ENCODE measurements at regions of chr12 and their contacts with region 1.

Region 1: DNA sequence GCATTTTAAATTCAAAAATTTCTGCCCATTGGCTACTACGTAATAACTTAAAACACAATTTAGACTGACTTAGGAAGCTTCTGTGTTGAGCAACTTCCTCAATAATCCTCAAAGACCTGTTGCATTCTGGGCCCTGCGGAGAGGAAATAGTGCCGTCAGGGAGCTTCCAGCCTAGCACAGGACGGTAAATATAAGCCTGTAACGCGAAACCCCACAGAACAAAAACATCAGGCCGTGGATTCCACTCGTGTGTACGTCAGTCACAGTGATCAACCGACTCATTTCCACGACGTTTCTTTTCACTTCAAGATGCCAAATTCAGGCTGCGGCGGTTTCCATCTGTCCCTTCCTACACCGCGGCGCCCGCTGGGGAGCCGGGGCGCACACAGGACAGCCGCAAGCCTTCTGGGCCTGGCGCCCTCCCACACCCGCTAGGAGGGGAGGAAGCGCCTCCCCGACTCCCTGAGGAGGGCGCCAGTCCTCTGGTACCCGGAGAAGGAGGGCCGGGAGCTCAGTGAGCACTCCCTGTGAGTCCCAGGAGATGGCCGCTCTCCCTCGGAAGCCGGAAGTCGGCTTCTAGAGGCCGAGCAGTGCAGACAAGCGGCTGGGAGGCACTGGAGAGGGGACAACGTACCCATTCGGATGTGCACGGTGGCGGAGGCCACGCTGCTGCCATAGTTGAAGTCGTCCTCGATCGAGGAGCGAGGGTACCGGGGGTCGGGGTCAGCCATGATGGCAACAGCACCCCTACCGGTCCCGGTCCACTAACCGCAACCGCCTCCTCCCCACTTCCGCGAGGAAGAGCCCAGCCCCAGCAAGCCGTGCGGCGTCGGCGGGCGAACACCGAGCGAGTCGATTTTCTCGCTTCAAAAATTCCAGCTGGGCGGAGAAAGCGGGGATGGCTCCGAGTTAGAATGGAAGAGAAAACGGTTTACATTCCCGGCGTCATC is at the start of gene TMBIM4:
- DNase-seq: peak; percentile 80 to 84
- H3K4me3 ChIP-seq: peak within 1 kb of the TSS; percentile 74
- H3K27ac ChIP-seq: peak within 1 kb of the TSS; percentile 87
- H3K4me1 ChIP-seq: peaks cover 10% of the 10 kb centered on the region
- H3K27me3 ChIP-seq: no peaks in the 10 kb centered on the region
- CTCF ChIP-seq: peak; percentile 59; the same call in 1 of the 2 replicates
- total RNA-seq, gene TMBIM4: 48.2 and 49.8 TPM in 2 replicates

Region 2: GRCh38 chr12:65740873-65741600 is 428.5 kb before region 1 on chr12:
- CTCF ChIA-PET with region 1: no interaction called
- POLR2A ChIA-PET with region 1: interaction called, 19 read pairs
- intact Hi-C with region 1: no loop called
- DNase-seq: peak in 1 of 2 experiments; percentile 18
- H3K4me3 ChIP-seq: no peak overlapping the region
- H3K27ac ChIP-seq: no peak overlapping the region
- H3K4me1 ChIP-seq: no peaks in the 10 kb centered on the region
- H3K27me3 ChIP-seq: no peaks in the 10 kb centered on the region
- CTCF ChIP-seq: no peak

Region 3: DNA sequence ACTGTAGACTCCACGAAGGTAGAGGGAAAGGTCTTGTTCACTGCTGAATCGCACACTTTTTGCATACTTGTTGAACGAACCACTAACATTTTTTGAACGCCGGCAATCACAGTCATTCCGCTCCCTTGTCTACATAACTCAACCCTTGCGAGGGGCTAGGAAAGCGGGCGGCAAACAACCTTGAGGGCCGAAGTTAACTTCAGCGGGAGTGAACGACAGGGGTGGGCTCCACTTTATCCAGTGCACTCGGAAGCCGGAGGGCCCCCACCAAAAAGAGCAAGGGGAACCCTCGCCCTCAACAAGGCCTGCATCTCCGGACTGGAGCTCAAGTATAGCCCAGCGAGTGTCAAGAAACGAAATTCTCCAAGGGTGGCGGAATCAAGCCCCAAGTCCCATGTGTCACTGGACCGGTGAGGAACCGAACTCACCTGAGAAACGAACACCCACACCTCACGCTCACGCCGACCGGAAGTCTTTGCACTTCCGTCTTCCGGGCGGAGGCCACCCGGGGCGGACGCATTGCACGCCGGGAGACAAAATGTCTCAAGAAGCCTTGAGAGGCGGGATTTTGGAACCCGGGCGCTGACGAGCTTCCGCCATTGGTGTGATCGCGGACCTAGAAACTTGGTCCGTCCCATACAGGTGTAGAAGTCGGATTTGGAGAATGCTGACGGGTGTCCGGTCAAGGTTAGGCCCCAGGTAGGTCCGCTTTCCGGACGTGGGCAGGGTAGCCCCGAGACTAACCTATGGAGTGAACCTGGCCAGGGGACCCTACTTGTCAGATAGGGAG is 39.0 kb before region 1 on chr12 and contains the start of gene LLPH:
- CTCF ChIA-PET with region 1: interaction called, 3 read pairs
- POLR2A ChIA-PET with region 1: no interaction called
- intact Hi-C with region 1: loop called (anchors 2 kb)
- DNase-seq: peak; percentile 84 to 91
- H3K4me3 ChIP-seq: peak within 1 kb of the TSS; percentile 91
- H3K27ac ChIP-seq: peak within 1 kb of the TSS; percentile 63
- H3K4me1 ChIP-seq: peaks cover 16% of the 10 kb centered on the region
- H3K27me3 ChIP-seq: no peaks in the 10 kb centered on the region
- CTCF ChIP-seq: no peak
- total RNA-seq, gene LLPH: 20.4 and 25.0 TPM in 2 replicates

Region 4: DNA sequence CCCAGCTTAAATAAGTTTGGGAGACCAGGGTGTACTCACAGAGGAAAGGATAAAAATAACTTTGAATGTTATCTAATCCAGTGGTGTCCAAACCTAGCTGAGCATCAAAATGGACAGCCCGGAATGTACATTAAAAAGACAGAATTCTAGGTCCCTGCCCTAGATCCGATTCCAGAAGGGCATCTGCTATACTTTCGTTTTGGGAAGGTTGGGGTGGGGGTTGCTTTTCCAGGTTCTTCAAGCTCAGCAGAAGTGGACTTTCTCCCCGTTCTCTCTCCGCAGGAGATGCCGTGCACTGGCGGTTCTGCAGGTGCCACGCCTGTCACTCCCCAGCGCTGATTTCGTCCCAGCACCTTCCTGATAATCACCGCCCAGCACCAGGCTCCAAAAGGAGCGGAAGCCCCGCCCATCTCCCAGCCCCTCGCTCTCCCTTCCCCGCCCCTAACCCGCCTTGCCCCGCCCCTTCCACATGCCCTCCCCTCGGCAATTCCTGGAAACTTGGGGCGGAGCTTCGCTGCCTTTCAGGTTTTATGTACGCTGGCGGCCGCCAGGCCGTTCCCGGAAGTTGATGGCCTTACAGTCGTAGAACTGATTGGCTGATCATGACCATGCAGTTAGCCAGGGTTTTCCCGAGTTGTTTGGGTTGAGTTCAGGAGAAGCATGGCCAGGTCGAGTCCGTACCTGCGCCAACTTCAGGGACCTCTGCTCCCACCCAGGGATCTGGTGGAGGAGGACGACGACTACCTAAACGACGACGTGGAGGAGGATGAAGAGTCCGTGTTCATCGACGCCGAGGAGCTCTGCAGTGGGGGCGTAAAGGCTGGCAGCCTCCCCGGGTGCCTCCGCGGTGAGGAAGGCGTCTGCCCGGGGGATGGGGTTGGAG is 132.7 kb after region 1 on chr12 and contains the start of gene HELB:
- CTCF ChIA-PET with region 1: interaction called, 7 read pairs
- POLR2A ChIA-PET with region 1: interaction called, 3 read pairs
- intact Hi-C with region 1: loop called (anchors 1 kb)
- DNase-seq: peak; percentile 92 to 94
- H3K4me3 ChIP-seq: peak within 1 kb of the TSS; percentile 89
- H3K27ac ChIP-seq: peak within 1 kb of the TSS; percentile 61
- H3K4me1 ChIP-seq: peaks cover 9% of the 10 kb centered on the region; the same call in 1 of the 2 replicates
- H3K27me3 ChIP-seq: no peaks in the 10 kb centered on the region
- CTCF ChIP-seq: no peak
- total RNA-seq, gene HELB: 8.2 and 10.0 TPM in 2 replicates

Region 5: GRCh38 chr12:66563220-66563619 is 393.7 kb after region 1 on chr12:
- CTCF ChIA-PET with region 1: no interaction called
- POLR2A ChIA-PET with region 1: no interaction called
- intact Hi-C with region 1: no loop called
- DNase-seq: no peak
- H3K4me3 ChIP-seq: no peak overlapping the region
- H3K27ac ChIP-seq: no peak overlapping the region
- H3K4me1 ChIP-seq: no peaks in the 10 kb centered on the region
- H3K27me3 ChIP-seq: no peaks in the 10 kb centered on the region
- CTCF ChIP-seq: no peak